Activated B cell treated with CpG ODN at 0.5 μM for 24 hours (primary cell): ENCODE measurements at regions of chr13 and their contacts with region 1.

Region 1: GRCh38 chr13:108086678-108087077 is 128.7 kb downstream of the LIG4 start:
- DNase-seq: no peak
- ATAC-seq: no peak
- H3K4me3 Mint-ChIP-seq: no peak overlapping the region
- H3K27ac Mint-ChIP-seq: no peak overlapping the region
- H3K4me1 Mint-ChIP-seq: no peaks in the 10 kb centered on the region
- H3K27me3 Mint-ChIP-seq: no peaks in the 10 kb centered on the region
- CTCF ChIP-seq: no peak

Region 2: GRCh38 chr13:107211073-107211472 is 875.6 kb before region 1 on chr13:
- CTCF ChIA-PET with region 1: no interaction called
- POLR2A ChIA-PET with region 1: no interaction called
- intact Hi-C with region 1: loop called (anchors 10 kb)
- DNase-seq: no peak
- ATAC-seq: peak; percentile 50
- H3K4me3 Mint-ChIP-seq: no peak overlapping the region
- H3K27ac Mint-ChIP-seq: no peak overlapping the region
- H3K4me1 Mint-ChIP-seq: no peaks in the 10 kb centered on the region
- H3K27me3 Mint-ChIP-seq: no peaks in the 10 kb centered on the region
- CTCF ChIP-seq: no peak

Region 3: GRCh38 chr13:109529964-109530363 is 1443.3 kb after region 1 on chr13:
- CTCF ChIA-PET with region 1: no interaction called
- POLR2A ChIA-PET with region 1: no interaction called
- intact Hi-C with region 1: no loop called
- DNase-seq: no peak
- ATAC-seq: no peak
- H3K4me3 Mint-ChIP-seq: no peak overlapping the region
- H3K27ac Mint-ChIP-seq: no peak overlapping the region
- H3K4me1 Mint-ChIP-seq: no peaks in the 10 kb centered on the region
- H3K27me3 Mint-ChIP-seq: no peaks in the 10 kb centered on the region
- CTCF ChIP-seq: no peak